Heart right ventricle (tissue), 16 donors: ENCODE measurements at regions of chr1 and their contacts with region 1.

Region 1: DNA sequence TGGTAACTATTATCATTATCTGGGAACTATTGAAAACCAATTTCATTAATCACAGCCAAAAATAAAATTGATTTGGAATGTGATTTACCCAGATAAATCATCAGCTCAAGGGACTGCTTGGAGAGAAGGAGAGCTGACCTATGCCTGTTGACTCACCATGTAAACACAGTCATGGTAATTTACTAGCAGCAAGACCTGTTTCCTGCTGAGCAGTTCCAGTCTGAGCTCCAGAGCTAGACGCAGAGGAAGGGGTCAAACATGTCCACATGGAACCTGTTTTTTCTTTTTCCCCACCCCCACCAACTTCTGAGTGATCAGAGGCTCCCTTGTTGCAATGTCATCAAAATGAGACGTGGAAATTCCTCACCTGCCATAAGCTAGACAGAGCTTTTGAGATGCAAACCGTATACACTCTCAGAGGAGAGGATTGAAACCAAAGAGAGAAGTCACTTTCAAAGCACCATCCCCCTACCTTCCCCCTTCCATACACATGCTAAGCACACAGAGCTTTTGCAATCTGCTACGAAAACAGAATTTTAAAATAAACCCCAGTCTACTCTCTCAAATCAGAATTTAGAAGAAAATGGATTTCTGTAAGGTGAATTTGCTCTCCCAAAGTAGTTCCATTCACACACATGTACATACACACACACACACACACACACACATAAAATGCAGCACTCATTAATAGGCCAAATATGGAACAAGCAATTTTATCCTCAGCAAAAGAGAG is 55.9 kb upstream of the PTGFRN start:
- DNase-seq: no peak
- ATAC-seq: peak in 1 of 8 donors; percentile 66
- H3K4me3 ChIP-seq: no peak overlapping the region
- H3K27ac ChIP-seq: no peak overlapping the region
- H3K4me1 ChIP-seq: peaks cover 0 to 28% (median 15%) of the 10 kb centered on the region in 9 donors
- H3K27me3 ChIP-seq: no peaks in the 10 kb centered on the region
- CTCF ChIP-seq: no peak

Region 2: GRCh38 chr1:117051224-117052064 is 197.6 kb after region 1 on chr1:
- intact Hi-C with region 1: loop called in 9 of 10 experiments (anchors 1 to 10 kb)
- DNase-seq: no peak
- ATAC-seq: peak in 3 of 8 donors; percentile 35 to 50 (median 50)
- H3K4me3 ChIP-seq: peak overlapping the region in 4 of 10 donors; percentile 7 to 27 (median 17)
- H3K27ac ChIP-seq: peak overlapping the region in 3 of 10 donors; percentile 55 to 75 (median 63)
- H3K4me1 ChIP-seq: peaks cover 0 to 38% (median 0%) of the 10 kb centered on the region in 9 donors
- H3K27me3 ChIP-seq: no peaks in the 10 kb centered on the region
- CTCF ChIP-seq: no peak

Region 3: DNA sequence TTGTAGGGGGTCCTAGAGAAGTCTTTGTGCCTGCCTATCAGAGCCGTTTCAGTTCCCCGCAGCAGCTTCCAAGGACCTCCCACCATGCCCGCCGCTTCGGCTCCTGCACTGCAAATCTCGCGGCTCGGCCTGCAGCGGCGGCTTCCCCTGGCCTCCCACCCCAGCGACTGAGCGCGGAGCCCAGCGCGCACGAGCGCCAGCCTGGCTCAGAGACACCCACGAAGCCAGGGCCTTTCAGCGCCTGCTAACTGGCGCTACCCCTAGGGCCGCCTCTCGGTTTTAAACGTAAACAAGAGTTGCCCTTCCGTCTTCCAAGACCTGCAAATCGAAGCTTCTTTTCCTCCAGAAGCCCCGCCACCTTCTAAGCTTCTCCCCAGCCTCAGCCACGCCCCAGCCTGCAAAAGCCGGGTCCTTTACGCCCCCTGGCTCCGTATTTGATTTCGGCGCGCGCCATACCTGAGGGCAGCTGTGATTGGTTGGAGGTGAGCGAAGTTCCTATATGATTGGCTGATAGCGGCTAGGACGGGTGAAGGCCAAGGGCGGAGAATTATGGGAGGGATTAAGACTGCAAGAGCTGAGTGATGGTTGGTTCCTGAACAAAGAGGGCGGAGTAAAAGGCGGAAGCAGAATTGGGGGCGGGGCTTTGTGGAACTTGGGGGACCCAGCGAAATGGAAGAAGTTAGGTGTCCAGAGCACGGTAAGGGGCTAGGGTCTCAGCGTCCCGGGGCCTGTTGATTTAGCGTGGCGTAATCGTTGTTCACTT is 206.0 kb after region 1 on chr1 and contains the start of gene TTF2:
- intact Hi-C with region 1: loop called in 7 of 10 experiments (anchors 1 to 10 kb)
- DNase-seq: peak; percentile 82 to 97
- ATAC-seq: peak; percentile 99 to 100 (median 99)
- H3K4me3 ChIP-seq: peak within 1 kb of the TSS; percentile 57 to 88 (median 78)
- H3K27ac ChIP-seq: peak within 1 kb of the TSS in 8 of 10 donors; percentile 7 to 82 (median 64)
- H3K4me1 ChIP-seq: peaks cover 0 to 25% (median 9%) of the 10 kb centered on the region in 9 donors
- H3K27me3 ChIP-seq: no peaks in the 10 kb centered on the region
- CTCF ChIP-seq: peak in 7 of 9 donors; percentile 15 to 57 (median 30)
- total RNA-seq, gene TTF2: 5.0 to 19.0 (median 10.4) TPM